ENCODE measurements at regions of chr1 and their contacts with region 1.

Region 1: GRCh38 chr1:109397538-109398342 is at the start of gene SORT1:
- DNase-seq: peak; percentile 93 to 96 (median 94)
- ATAC-seq: peak; percentile 88
- H3K4me3 ChIP-seq: peak within 1 kb of the TSS; percentile 55
- H3K27ac ChIP-seq: peak within 1 kb of the TSS; percentile 51
- H3K4me1 ChIP-seq: peaks cover 29 to 34% of the 10 kb centered on the region in 2 experiments
- H3K27me3 ChIP-seq: no peaks in the 10 kb centered on the region
- CTCF ChIP-seq: peak in 2 of 3 experiments; percentile 37 to 60; a peak in 4 of 6 replicates
- EP300 ChIP-seq: no peak
- POLR2A ChIP-seq: no peak
- RAD21 ChIP-seq: peak; percentile 56 to 81
- polyA plus RNA-seq, gene SORT1: 27.4 to 33.3 TPM

Region 2: GRCh38 chr1:108780937-108781574 is 616.7 kb before region 1 on chr1:
- CTCF ChIA-PET with region 1: no interaction called
- POLR2A ChIA-PET with region 1: no interaction called
- in situ Hi-C with region 1: no loop called
- intact Hi-C with region 1: no loop called
- DNase-seq: peak; percentile 28 to 67 (median 48)
- ATAC-seq: peak; percentile 81
- H3K4me3 ChIP-seq: no peak overlapping the region
- H3K27ac ChIP-seq: peak overlapping the region; percentile 59; the same call in 2 of the 3 replicates
- H3K4me1 ChIP-seq: peaks cover 3 to 11% of the 10 kb centered on the region in 2 experiments; a peak in 3 of 5 replicates
- H3K27me3 ChIP-seq: no peaks in the 10 kb centered on the region
- CTCF ChIP-seq: no peak
- EP300 ChIP-seq: peak; percentile 57; the same call in 1 of the 2 replicates
- POLR2A ChIP-seq: no peak
- RAD21 ChIP-seq: no peak

Region 3: DNA sequence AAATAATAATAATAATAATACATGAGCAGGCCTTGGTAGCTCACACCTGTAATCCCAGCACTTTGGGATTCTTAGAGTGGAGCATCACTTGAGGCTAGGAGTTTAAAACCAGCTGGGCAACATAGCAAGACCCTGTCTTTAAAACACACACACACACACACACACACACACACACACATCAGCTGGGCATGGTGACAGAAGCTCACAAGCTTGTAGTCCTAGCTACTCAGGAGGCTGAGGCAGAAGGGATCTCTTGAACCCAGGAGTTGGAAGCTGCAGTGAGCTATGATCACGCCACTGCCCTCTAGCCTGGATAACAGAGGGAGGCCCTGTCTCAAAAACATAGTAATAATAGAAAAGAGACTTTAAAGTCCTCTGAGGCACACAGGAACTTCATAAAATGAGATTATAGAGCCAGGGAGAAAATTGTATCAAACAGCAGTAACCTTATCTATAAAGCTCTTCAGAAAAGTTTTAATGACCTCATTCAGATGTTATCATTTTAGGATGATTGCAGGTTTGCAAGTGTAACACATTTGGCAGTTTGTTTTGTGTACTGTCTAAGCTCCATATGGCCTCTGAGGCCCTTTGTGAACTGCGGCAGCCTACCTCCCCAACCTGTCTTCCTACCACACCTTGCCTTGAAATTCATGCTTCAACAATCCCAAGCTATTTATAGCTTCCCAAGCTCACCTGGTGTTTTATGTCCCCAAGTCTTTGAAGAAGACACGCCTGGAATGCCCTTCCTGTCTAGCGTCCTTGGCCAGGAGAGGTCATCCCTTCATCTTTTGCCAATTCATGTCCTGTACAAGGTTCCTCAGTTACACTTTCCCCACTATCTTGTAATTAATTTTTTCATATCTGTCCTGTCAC is 532.5 kb before region 1 on chr1:
- CTCF ChIA-PET with region 1: no interaction called
- POLR2A ChIA-PET with region 1: no interaction called
- in situ Hi-C with region 1: no loop called
- intact Hi-C with region 1: no loop called
- DNase-seq: no peak
- ATAC-seq: no peak; the same call in 1 of the 3 replicates
- H3K4me3 ChIP-seq: no peak overlapping the region
- H3K27ac ChIP-seq: no peak overlapping the region
- H3K4me1 ChIP-seq: no peaks in the 10 kb centered on the region
- H3K27me3 ChIP-seq: no peaks in the 10 kb centered on the region
- CTCF ChIP-seq: no peak
- EP300 ChIP-seq: no peak
- POLR2A ChIP-seq: no peak
- RAD21 ChIP-seq: no peak

Region 4: GRCh38 chr1:109201123-109201703 is 196.5 kb before region 1 on chr1:
- CTCF ChIA-PET with region 1: interaction called, 21 read pairs
- POLR2A ChIA-PET with region 1: interaction called, 5 read pairs
- in situ Hi-C with region 1: no loop called
- intact Hi-C with region 1: loop called (anchors 1 kb)
- DNase-seq: peak; percentile 91 to 93 (median 92)
- ATAC-seq: peak; percentile 85
- H3K4me3 ChIP-seq: no peak overlapping the region
- H3K27ac ChIP-seq: no peak overlapping the region
- H3K4me1 ChIP-seq: peaks cover 22 to 39% of the 10 kb centered on the region in 2 experiments
- H3K27me3 ChIP-seq: no peaks in the 10 kb centered on the region
- CTCF ChIP-seq: peak; percentile 87 to 98 (median 97)
- EP300 ChIP-seq: no peak
- POLR2A ChIP-seq: no peak
- RAD21 ChIP-seq: peak; percentile 88 to 92

Region 5: GRCh38 chr1:109263597-109264398 is 133.9 kb before region 1 on chr1:
- CTCF ChIA-PET with region 1: interaction called, 91 read pairs
- POLR2A ChIA-PET with region 1: interaction called, 9 read pairs
- in situ Hi-C with region 1: loop called (anchors 5 kb)
- intact Hi-C with region 1: loop called (anchors 1 kb)
- DNase-seq: peak; percentile 91 to 96 (median 93)
- ATAC-seq: peak; percentile 99
- H3K4me3 ChIP-seq: no peak overlapping the region
- H3K27ac ChIP-seq: no peak overlapping the region
- H3K4me1 ChIP-seq: peaks cover 0 to 31% of the 10 kb centered on the region in 2 experiments; a peak in 2 of 5 replicates
- H3K27me3 ChIP-seq: no peaks in the 10 kb centered on the region
- CTCF ChIP-seq: peak; percentile 99 to 100 (median 100)
- EP300 ChIP-seq: peak; percentile 16; the same call in 1 of the 2 replicates
- POLR2A ChIP-seq: no peak
- RAD21 ChIP-seq: peak; percentile 98 to 100

Region 6: GRCh38 chr1:109277434-109278204 is 120.1 kb before region 1 on chr1:
- CTCF ChIA-PET with region 1: interaction called, 51 read pairs
- POLR2A ChIA-PET with region 1: interaction called, 16 read pairs
- in situ Hi-C with region 1: no loop called
- intact Hi-C with region 1: loop called (anchors 1 kb)
- DNase-seq: peak; percentile 91 to 94 (median 92)
- ATAC-seq: peak; percentile 90
- H3K4me3 ChIP-seq: no peak overlapping the region
- H3K27ac ChIP-seq: peak overlapping the region; percentile 51
- H3K4me1 ChIP-seq: peaks cover 63 to 65% of the 10 kb centered on the region in 2 experiments
- H3K27me3 ChIP-seq: no peaks in the 10 kb centered on the region
- CTCF ChIP-seq: peak; percentile 95 to 99 (median 97)
- EP300 ChIP-seq: no peak; the same call in 1 of the 2 replicates
- POLR2A ChIP-seq: no peak
- RAD21 ChIP-seq: peak; percentile 89 to 98

Region 7: GRCh38 chr1:109282952-109283747 is 114.6 kb before region 1 on chr1 and contains the start of gene PSRC1:
- CTCF ChIA-PET with region 1: interaction called, 51 read pairs
- POLR2A ChIA-PET with region 1: interaction called, 16 read pairs
- in situ Hi-C with region 1: no loop called
- intact Hi-C with region 1: loop called (anchors 2 kb)
- DNase-seq: peak; percentile 99 to 100 (median 100)
- ATAC-seq: peak; percentile 97
- H3K4me3 ChIP-seq: peak within 1 kb of the TSS; percentile 68
- H3K27ac ChIP-seq: peak within 1 kb of the TSS; percentile 97
- H3K4me1 ChIP-seq: peaks cover 31 to 37% of the 10 kb centered on the region in 2 experiments
- H3K27me3 ChIP-seq: no peaks in the 10 kb centered on the region
- CTCF ChIP-seq: peak; percentile 65 to 93 (median 76); a peak in 5 of 6 replicates
- EP300 ChIP-seq: no peak; the same call in none of the 2 replicates
- POLR2A ChIP-seq: peak; percentile 97
- RAD21 ChIP-seq: peak; percentile 47 to 59; a peak in 3 of 4 replicates
- polyA plus RNA-seq, gene PSRC1: 6.5 to 7.9 TPM

Region 8: GRCh38 chr1:109361649-109362048 is 36.1 kb before region 1 on chr1:
- CTCF ChIA-PET with region 1: interaction called, 5 read pairs
- POLR2A ChIA-PET with region 1: interaction called, 3 read pairs
- in situ Hi-C with region 1: no loop called
- intact Hi-C with region 1: loop called (anchors 5 kb)
- DNase-seq: no peak
- ATAC-seq: no peak
- H3K4me3 ChIP-seq: no peak overlapping the region
- H3K27ac ChIP-seq: no peak overlapping the region
- H3K4me1 ChIP-seq: peaks cover 0 to 6% of the 10 kb centered on the region in 2 experiments; a peak in 2 of 5 replicates
- H3K27me3 ChIP-seq: no peaks in the 10 kb centered on the region
- CTCF ChIP-seq: no peak
- EP300 ChIP-seq: no peak
- POLR2A ChIP-seq: no peak
- RAD21 ChIP-seq: no peak

Region 9: GRCh38 chr1:109438798-109439297 is 41.1 kb after region 1 on chr1:
- CTCF ChIA-PET with region 1: no interaction called
- POLR2A ChIA-PET with region 1: no interaction called
- in situ Hi-C with region 1: no loop called
- intact Hi-C with region 1: no loop called
- DNase-seq: peak; percentile 32 to 78 (median 56)
- ATAC-seq: peak; percentile 87
- H3K4me3 ChIP-seq: no peak overlapping the region
- H3K27ac ChIP-seq: peak overlapping the region; percentile 4; the same call in 1 of the 3 replicates
- H3K4me1 ChIP-seq: peaks cover 0 to 15% of the 10 kb centered on the region in 2 experiments; a peak in 3 of 5 replicates
- H3K27me3 ChIP-seq: no peaks in the 10 kb centered on the region; a peak in 1 of 5 replicates
- CTCF ChIP-seq: no peak; a peak in 1 of 6 replicates
- EP300 ChIP-seq: no peak
- POLR2A ChIP-seq: no peak
- RAD21 ChIP-seq: no peak